Calu3 (cell line): ENCODE measurements at regions of chr18 and their contacts with region 1.

Region 1: GRCh38 chr18:70384181-70384790 is 95.4 kb downstream of the SOCS6 start:
- DNase-seq: peak; percentile 86
- H3K4me3 Mint-ChIP-seq: peak overlapping the region; percentile 66
- H3K27ac Mint-ChIP-seq: peak overlapping the region; percentile 98
- H3K4me1 Mint-ChIP-seq: peaks cover 54% of the 10 kb centered on the region
- H3K27me3 Mint-ChIP-seq: no peaks in the 10 kb centered on the region
- CTCF ChIP-seq: no peak

Region 2: DNA sequence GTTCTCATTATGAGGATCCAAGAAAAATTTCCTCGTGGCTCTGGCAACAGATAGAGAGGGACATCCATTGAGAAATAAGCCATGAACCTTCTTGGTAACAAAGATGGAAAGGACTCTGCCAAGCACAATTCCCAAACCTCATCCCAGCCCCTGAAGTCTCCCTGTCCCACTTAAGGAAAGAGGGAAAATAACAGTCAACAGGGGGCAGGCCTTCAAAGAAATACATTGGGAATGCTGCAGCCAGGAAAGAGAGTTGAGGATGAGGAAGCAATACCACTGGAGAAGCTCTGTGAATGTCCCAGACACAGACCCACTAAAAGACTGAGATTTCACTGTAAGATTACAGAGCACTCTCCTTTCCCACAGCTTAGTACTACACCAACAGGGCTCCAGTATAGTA is 529.8 kb before region 1 on chr18:
- CTCF ChIA-PET with region 1: no interaction called
- intact Hi-C with region 1: no loop called
- DNase-seq: no peak
- H3K4me3 Mint-ChIP-seq: no peak overlapping the region
- H3K27ac Mint-ChIP-seq: no peak overlapping the region
- H3K4me1 Mint-ChIP-seq: no peaks in the 10 kb centered on the region
- H3K27me3 Mint-ChIP-seq: no peaks in the 10 kb centered on the region
- CTCF ChIP-seq: no peak

Region 3: GRCh38 chr18:70195852-70196434 is 188.3 kb before region 1 on chr18:
- CTCF ChIA-PET with region 1: interaction called, 4 read pairs
- intact Hi-C with region 1: loop called (anchors 5 kb)
- DNase-seq: peak; percentile 27
- H3K4me3 Mint-ChIP-seq: no peak overlapping the region
- H3K27ac Mint-ChIP-seq: no peak overlapping the region
- H3K4me1 Mint-ChIP-seq: peaks cover 9% of the 10 kb centered on the region
- H3K27me3 Mint-ChIP-seq: no peaks in the 10 kb centered on the region
- CTCF ChIP-seq: peak; percentile 50

Region 4: GRCh38 chr18:70296289-70296688 is 88.0 kb before region 1 on chr18:
- CTCF ChIA-PET with region 1: no interaction called
- intact Hi-C with region 1: loop called (anchors 2 kb)
- DNase-seq: peak; percentile 72
- H3K4me3 Mint-ChIP-seq: peak overlapping the region; percentile 67
- H3K27ac Mint-ChIP-seq: peak overlapping the region; percentile 80
- H3K4me1 Mint-ChIP-seq: peaks cover 60% of the 10 kb centered on the region
- H3K27me3 Mint-ChIP-seq: no peaks in the 10 kb centered on the region
- CTCF ChIP-seq: no peak

Region 5: GRCh38 chr18:70337139-70337972 is 46.9 kb before region 1 on chr18:
- CTCF ChIA-PET with region 1: no interaction called
- intact Hi-C with region 1: loop called (anchors 5 kb)
- DNase-seq: peak; percentile 63
- H3K4me3 Mint-ChIP-seq: peak overlapping the region; percentile 8
- H3K27ac Mint-ChIP-seq: peak overlapping the region; percentile 90
- H3K4me1 Mint-ChIP-seq: peaks cover 25% of the 10 kb centered on the region
- H3K27me3 Mint-ChIP-seq: no peaks in the 10 kb centered on the region
- CTCF ChIP-seq: no peak

Region 6: GRCh38 chr18:70421471-70422390 is 37.4 kb after region 1 on chr18:
- CTCF ChIA-PET with region 1: interaction called, 10 read pairs
- intact Hi-C with region 1: loop called (anchors 2 kb)
- DNase-seq: peak; percentile 86
- H3K4me3 Mint-ChIP-seq: peak overlapping the region; percentile 46
- H3K27ac Mint-ChIP-seq: peak overlapping the region; percentile 93
- H3K4me1 Mint-ChIP-seq: peaks cover 75% of the 10 kb centered on the region
- H3K27me3 Mint-ChIP-seq: no peaks in the 10 kb centered on the region
- CTCF ChIP-seq: no peak

Region 7: DNA sequence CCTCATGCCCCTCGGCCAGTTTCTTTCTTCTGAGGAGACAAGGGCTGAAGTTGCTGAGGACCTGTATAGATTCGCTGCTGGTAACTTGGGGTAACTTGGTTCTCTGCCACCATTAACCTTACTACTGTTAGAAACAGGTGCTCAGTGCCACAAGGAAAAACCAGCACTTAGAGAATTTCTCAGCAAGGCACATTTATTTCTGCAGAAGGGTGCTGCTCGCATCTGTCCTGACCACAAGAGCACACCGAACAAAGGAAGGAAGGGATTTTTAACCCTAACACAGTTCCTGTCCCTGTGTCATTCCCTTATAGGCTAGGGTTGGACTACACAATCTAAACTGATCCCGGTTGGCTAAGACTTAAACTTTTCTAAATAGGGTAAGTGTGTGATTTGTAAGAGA is 58.6 kb after region 1 on chr18:
- CTCF ChIA-PET with region 1: no interaction called
- intact Hi-C with region 1: no loop called
- DNase-seq: no peak
- H3K4me3 Mint-ChIP-seq: no peak overlapping the region
- H3K27ac Mint-ChIP-seq: no peak overlapping the region
- H3K4me1 Mint-ChIP-seq: no peaks in the 10 kb centered on the region
- H3K27me3 Mint-ChIP-seq: no peaks in the 10 kb centered on the region
- CTCF ChIP-seq: no peak